Activated CD4-positive, alpha-beta T cell treated with anti-CD3 and anti-CD28 coated beads for 36 hours (primary cell): ENCODE measurements at regions of chr1 and their contacts with region 1.

Region 1: DNA sequence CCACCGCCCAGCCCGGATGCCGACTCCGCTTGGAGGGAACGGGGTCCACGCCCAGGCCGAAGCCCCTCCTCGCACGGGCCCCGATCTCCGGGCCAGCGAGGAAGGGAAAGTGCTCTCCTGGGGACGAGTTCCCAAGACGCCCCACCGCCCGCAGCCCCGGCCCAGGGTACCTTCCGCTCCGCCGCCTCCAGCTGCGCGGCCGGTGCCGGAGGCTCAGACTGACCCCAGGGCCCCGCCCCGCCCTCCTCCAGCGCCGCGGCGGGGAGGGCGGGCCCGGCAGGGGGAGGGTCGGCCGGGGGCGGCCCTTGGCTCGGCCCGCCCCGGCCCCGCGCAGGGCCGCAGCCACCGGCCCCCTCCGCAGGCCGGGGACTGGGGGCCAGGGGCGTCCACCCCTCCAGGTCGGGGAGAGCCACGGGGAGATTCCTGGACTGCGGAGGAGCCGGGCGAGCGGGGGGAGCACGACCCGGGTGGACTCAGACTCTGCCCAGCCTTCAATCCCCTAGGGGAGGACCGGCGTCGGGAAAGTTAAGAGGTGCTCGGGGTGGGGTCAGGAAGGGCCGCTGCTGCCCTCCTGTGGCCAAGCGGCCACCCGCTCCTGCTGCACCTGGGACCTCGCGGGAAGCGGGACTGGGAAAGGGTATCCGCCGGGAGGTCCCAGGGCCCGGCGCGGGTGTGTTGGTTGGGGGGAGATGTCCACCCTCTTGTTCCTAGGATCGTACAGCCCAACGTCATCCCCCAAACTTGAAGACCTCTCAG is at the start of gene RHOC:
- DNase-seq: peak; percentile 85
- ATAC-seq: peak; percentile 43
- H3K4me3 Mint-ChIP-seq: peak within 1 kb of the TSS; percentile 58
- H3K27ac Mint-ChIP-seq: peak within 1 kb of the TSS; percentile 45
- H3K4me1 Mint-ChIP-seq: peaks cover 48% of the 10 kb centered on the region
- H3K27me3 Mint-ChIP-seq: peaks cover 2% of the 10 kb centered on the region
- total RNA-seq, gene RHOC: 32.8 to 45.7 TPM

Region 2: GRCh38 chr1:112466078-112466660 is 240.9 kb before region 1 on chr1:
- CTCF ChIA-PET with region 1: no interaction called
- POLR2A ChIA-PET with region 1: no interaction called
- intact Hi-C with region 1: loop called in 1 of 2 experiments (anchors 1 kb)
- DNase-seq: peak; percentile 93
- ATAC-seq: peak; percentile 97
- H3K4me3 Mint-ChIP-seq: peak overlapping the region; percentile 67
- H3K27ac Mint-ChIP-seq: peak overlapping the region; percentile 83
- H3K4me1 Mint-ChIP-seq: peaks cover 12% of the 10 kb centered on the region
- H3K27me3 Mint-ChIP-seq: peaks cover 15% of the 10 kb centered on the region

Region 3: DNA sequence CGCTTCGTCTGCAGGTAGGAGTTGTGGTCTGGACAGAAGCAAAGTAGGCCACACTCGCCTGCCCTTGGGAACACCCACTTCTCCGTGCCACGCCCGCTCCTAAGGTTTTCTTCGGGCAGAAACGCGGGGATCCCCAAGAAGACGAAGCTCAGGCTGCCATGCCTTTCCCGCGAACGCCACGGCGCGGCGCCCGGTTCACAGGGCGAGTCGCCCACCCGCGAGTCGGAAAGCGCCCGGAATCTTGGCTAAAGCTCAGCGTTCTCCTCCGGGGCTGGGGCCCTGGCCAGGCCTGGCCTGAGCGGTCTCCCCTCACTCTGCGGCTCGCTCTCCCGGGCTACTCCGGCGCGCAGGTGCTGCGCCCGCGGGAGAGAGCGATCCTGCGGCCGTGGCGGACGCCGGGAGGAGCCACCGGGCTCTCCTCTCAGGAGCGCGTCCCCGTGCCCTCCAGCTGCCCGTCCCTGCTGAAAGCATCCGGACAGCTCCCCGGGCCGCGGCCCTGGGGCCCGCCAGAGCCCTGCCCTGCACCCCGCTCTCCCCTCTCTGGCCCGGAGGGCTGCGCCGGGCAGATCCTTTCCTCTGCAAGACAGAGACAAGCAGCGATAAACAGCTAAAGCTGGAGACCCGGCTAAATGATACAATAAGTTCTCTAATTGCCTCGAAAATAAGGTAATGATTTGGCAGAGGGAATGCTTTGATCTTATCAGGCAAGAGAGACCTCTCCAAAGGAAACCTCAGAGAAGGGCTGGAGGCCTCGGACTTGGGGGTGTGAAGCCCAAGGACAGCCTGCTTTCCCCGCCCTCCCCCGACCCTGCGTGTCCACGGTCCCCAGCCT is 205.1 kb before region 1 on chr1:
- CTCF ChIA-PET with region 1: interaction called, 16 read pairs
- POLR2A ChIA-PET with region 1: no interaction called
- intact Hi-C with region 1: loop called (anchors 1 to 2 kb)
- DNase-seq: peak; percentile 77
- ATAC-seq: peak; percentile 79
- H3K4me3 Mint-ChIP-seq: peak overlapping the region; percentile 26
- H3K27ac Mint-ChIP-seq: no peak overlapping the region
- H3K4me1 Mint-ChIP-seq: peaks cover 4% of the 10 kb centered on the region
- H3K27me3 Mint-ChIP-seq: peaks cover 49% of the 10 kb centered on the region

Region 4: DNA sequence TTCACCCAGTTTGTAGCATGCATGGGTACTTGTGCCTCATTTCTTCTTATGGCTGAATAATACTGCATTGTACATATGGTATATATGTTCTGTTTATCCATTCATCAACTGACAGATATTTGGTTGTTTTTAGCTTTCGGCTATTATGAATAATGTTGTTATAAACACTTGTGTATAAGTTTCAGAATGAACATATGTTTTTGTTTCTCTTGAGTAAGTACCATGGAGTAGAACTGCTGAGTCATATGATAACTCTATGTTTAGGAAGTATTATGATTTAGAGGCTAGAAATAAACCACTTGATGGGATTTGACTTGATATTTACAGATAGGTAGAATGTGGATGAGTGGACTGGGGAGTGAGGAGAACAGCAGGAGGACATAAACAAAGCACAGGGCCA is 149.7 kb before region 1 on chr1:
- CTCF ChIA-PET with region 1: no interaction called
- POLR2A ChIA-PET with region 1: no interaction called
- intact Hi-C with region 1: no loop called
- DNase-seq: no peak
- ATAC-seq: peak; percentile 16
- H3K4me3 Mint-ChIP-seq: no peak overlapping the region
- H3K27ac Mint-ChIP-seq: no peak overlapping the region
- H3K4me1 Mint-ChIP-seq: no peaks in the 10 kb centered on the region
- H3K27me3 Mint-ChIP-seq: no peaks in the 10 kb centered on the region

Region 5: DNA sequence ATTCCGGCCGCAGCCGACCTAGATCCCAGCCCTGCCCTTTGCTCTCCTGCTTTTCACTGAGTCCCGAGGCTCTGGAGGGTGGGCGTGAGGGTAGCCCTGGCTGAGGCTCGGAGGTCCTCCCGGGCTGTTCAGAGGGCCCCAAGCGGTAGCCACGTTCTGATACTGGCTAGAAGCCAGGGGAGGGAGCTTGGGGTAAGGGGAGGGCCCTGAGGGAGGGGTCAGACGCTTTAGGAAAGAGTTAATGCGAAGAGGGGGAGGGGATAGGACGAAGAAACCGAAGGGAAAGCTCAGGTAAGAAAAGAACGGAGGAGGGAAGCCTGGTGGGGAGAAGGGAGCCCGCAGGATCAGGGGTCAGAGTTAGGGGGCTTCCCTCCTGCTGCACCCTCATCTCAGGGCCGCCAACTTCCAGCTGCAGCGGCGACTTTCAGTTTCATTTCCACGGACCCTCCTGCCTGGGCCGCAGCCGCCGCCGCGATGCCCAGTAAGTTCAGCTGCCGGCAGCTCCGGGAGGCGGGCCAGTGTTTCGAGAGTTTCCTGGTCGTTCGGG is 32.6 kb before region 1 on chr1 and contains the start of gene MOV10:
- CTCF ChIA-PET with region 1: interaction called, 8 read pairs
- POLR2A ChIA-PET with region 1: interaction called, 19 read pairs
- intact Hi-C with region 1: loop called (anchors 1 to 2 kb)
- DNase-seq: peak; percentile 77
- ATAC-seq: peak; percentile 83
- H3K4me3 Mint-ChIP-seq: peak within 1 kb of the TSS; percentile 88
- H3K27ac Mint-ChIP-seq: peak within 1 kb of the TSS; percentile 92
- H3K4me1 Mint-ChIP-seq: peaks cover 43% of the 10 kb centered on the region
- H3K27me3 Mint-ChIP-seq: no peaks in the 10 kb centered on the region
- total RNA-seq, gene MOV10: 80.3 to 87.5 TPM